ENCODE measurements at regions of chr18 and their contacts with region 1.

Region 1: DNA sequence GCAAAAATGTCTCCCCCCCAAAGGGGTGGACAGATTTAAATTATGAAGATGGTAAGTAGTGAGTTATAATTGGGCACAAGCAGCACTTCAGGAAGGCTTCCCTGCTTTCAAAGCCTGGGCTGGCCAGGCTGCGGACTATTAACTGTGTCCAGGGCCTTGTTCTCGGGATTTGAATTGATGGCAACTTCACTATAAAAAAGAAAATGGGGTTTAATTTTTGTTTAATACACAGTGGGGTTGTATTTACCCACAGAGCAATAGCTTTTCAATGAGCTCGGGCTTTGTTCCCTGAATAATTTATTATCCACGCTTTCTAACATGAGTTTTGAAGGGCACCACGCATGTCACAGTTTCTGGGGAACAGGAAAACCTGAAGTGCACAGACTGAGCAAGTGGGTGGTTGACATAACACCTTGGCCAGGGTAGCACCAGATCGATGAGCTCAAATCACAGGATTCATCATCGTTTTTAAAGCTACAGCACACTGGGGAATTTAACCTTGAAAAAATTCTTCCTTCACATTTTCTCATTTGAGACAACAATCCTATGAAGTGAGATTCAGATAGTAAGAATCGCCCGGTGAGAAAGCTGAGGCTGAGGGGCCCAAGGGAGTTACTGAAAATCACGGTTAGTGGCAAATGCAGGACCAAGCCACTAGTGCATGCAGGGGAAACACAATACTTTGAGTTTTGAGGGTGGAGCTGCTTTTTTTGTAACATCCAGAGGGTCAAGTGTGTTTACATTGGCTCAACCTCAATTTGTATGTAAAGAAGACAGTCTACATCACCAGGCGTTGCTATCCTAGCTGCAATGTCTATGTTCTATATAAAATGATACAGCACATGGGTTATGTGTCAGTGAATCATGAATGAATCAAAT is 28.9 kb upstream of the LMAN1 start:
- DNase-seq: no peak
- ATAC-seq: no peak
- H3K4me3 ChIP-seq: no peak overlapping the region
- H3K27ac ChIP-seq: no peak overlapping the region
- H3K4me1 ChIP-seq: no peaks in the 10 kb centered on the region; the same call in 1 of the 2 replicates
- H3K27me3 ChIP-seq: peaks cover 6% of the 10 kb centered on the region; the same call in 1 of the 2 replicates
- CTCF ChIP-seq: no peak
- POLR2A ChIP-seq: no peak
- RAD21 ChIP-seq: no peak

Region 2: GRCh38 chr18:59318460-59319050 is 69.4 kb before region 1 on chr18 and contains the start of gene CPLX4:
- CTCF ChIA-PET with region 1: no interaction called
- POLR2A ChIA-PET with region 1: no interaction called
- dilution Hi-C with region 1: no loop called
- in situ Hi-C with region 1: no loop called
- intact Hi-C with region 1: loop called (anchors 5 kb)
- DNase-seq: no peak
- ATAC-seq: no peak
- H3K4me3 ChIP-seq: no peak within 1 kb of the TSS
- H3K27ac ChIP-seq: no peak within 1 kb of the TSS
- H3K4me1 ChIP-seq: no peaks in the 10 kb centered on the region
- H3K27me3 ChIP-seq: peaks cover 19% of the 10 kb centered on the region
- CTCF ChIP-seq: no peak
- POLR2A ChIP-seq: no peak
- RAD21 ChIP-seq: no peak
- total RNA-seq, gene CPLX4: not detected in 2 replicates

Region 3: GRCh38 chr18:59437851-59438569 is 50.1 kb after region 1 on chr18:
- CTCF ChIA-PET with region 1: no interaction called
- POLR2A ChIA-PET with region 1: interaction called, 12 read pairs
- dilution Hi-C with region 1: no loop called
- in situ Hi-C with region 1: no loop called
- intact Hi-C with region 1: no loop called
- DNase-seq: no peak
- ATAC-seq: no peak
- H3K4me3 ChIP-seq: no peak overlapping the region
- H3K27ac ChIP-seq: no peak overlapping the region
- H3K4me1 ChIP-seq: no peaks in the 10 kb centered on the region
- H3K27me3 ChIP-seq: no peaks in the 10 kb centered on the region
- CTCF ChIP-seq: no peak
- POLR2A ChIP-seq: no peak
- RAD21 ChIP-seq: no peak